ENCODE measurements at regions of chr12 and their contacts with region 1.

Region 1: GRCh38 chr12:53508534-53509199 is 1.4 kb upstream of the NPFF start:
- DNase-seq: no peak
- H3K4me3 ChIP-seq: no peak overlapping the region
- H3K27me3 ChIP-seq: no peaks in the 10 kb centered on the region
- CTCF ChIP-seq: peak; percentile 94

Region 2: GRCh38 chr12:53321074-53321814 is 187.4 kb before region 1 on chr12 and contains the start of gene AAAS:
- CTCF ChIA-PET with region 1: interaction called, 34 read pairs
- POLR2A ChIA-PET with region 1: no interaction called
- DNase-seq: peak; percentile 71
- H3K4me3 ChIP-seq: peak within 1 kb of the TSS; percentile 88
- H3K27me3 ChIP-seq: no peaks in the 10 kb centered on the region
- CTCF ChIP-seq: peak; percentile 100
- polyA plus RNA-seq, gene AAAS: 53.3 and 84.3 TPM in 2 replicates

Region 3: GRCh38 chr12:53327435-53328042 is 181.1 kb before region 1 on chr12:
- CTCF ChIA-PET with region 1: interaction called, 34 read pairs
- POLR2A ChIA-PET with region 1: no interaction called
- DNase-seq: no peak
- H3K4me3 ChIP-seq: no peak overlapping the region
- H3K27me3 ChIP-seq: peaks cover 10% of the 10 kb centered on the region
- CTCF ChIP-seq: peak; percentile 37

Region 4: GRCh38 chr12:53467880-53468279 is 40.8 kb before region 1 on chr12:
- CTCF ChIA-PET with region 1: interaction called, 11 read pairs
- POLR2A ChIA-PET with region 1: no interaction called
- DNase-seq: no peak
- H3K4me3 ChIP-seq: no peak overlapping the region
- H3K27me3 ChIP-seq: no peaks in the 10 kb centered on the region
- CTCF ChIP-seq: no peak

Region 5: GRCh38 chr12:53476769-53477209 is 31.9 kb before region 1 on chr12:
- CTCF ChIA-PET with region 1: interaction called, 25 read pairs
- POLR2A ChIA-PET with region 1: no interaction called
- DNase-seq: no peak
- H3K4me3 ChIP-seq: no peak overlapping the region
- H3K27me3 ChIP-seq: no peaks in the 10 kb centered on the region
- CTCF ChIP-seq: peak; percentile 44

Region 6: GRCh38 chr12:53481957-53482586 is 26.6 kb before region 1 on chr12:
- CTCF ChIA-PET with region 1: interaction called, 25 read pairs
- POLR2A ChIA-PET with region 1: no interaction called
- DNase-seq: no peak
- H3K4me3 ChIP-seq: no peak overlapping the region
- H3K27me3 ChIP-seq: no peaks in the 10 kb centered on the region
- CTCF ChIP-seq: peak; percentile 27; the same call in 1 of the 2 replicates

Region 7: DNA sequence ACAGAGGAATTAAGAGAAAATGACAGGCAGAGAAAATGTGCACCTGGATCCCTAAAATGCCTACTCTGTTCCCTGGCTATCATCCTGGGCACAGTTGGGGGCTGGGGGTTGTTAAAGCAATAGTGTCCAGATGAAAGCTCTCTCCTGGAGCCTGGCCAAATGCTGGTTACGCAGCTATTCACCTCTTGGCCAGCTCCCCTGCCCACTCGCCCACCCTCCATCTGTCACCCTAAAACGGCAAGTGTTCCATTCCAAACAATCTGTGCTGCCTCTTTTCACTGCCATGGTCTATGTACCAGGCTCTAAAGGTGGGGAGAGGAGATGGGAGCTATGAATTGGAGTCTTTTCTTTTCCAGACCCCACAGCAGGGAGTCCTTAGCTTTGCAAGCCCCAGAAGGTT is 23.4 kb after region 1 on chr12:
- CTCF ChIA-PET with region 1: no interaction called
- POLR2A ChIA-PET with region 1: no interaction called
- DNase-seq: no peak
- H3K4me3 ChIP-seq: no peak overlapping the region
- H3K27me3 ChIP-seq: no peaks in the 10 kb centered on the region
- CTCF ChIP-seq: no peak

Region 8: DNA sequence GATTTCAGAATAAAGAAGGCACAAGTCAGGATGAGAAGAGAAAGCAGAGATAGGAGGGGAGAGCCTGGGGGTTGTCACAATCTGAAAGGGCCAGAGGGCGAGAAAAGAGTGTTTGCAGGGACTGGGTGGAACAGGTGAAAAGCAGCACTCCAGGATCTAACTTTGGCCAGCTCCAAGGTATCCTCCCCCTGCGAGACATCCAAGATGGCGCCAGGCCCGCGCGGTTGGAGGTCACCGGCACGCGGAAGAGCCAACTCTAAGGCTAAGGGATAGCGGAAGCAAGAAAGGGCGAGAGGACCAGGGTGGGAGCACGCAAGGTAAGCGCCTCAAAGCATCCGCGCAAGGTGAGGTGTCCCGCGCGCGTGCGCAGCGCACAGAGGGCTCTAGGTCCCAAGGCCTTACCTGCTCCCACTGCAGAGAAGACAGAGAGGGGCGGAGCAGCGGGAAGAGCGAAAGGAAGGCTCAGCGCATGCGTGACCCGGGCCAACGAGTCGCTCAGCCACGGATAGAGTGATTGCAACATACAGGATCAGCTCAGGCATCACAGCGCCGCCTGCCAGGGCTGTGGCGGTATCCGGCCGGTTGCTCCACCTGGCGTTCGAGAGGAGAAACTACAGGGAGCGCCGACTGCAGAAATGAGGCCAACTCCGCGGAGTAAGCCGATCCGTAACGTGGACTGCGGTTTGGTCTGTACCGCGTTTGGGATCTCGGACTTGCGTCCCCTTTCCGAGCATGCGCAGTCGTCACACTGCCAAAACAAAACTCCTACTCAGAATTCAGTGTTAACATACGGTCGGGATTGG is 167.2 kb after region 1 on chr12 and contains the start of gene ATP5MC2:
- CTCF ChIA-PET with region 1: interaction called, 12 read pairs
- POLR2A ChIA-PET with region 1: no interaction called
- DNase-seq: peak; percentile 96
- H3K4me3 ChIP-seq: peak within 1 kb of the TSS; percentile 76
- H3K27me3 ChIP-seq: no peaks in the 10 kb centered on the region
- CTCF ChIP-seq: peak; percentile 99
- polyA plus RNA-seq, gene ATP5MC2: 356 and 381 TPM in 2 replicates

Measured in BJ (cell line).